Transverse colon (tissue), 4 donors: ENCODE measurements at regions of chr7 and their contacts with region 1.

Region 1: DNA sequence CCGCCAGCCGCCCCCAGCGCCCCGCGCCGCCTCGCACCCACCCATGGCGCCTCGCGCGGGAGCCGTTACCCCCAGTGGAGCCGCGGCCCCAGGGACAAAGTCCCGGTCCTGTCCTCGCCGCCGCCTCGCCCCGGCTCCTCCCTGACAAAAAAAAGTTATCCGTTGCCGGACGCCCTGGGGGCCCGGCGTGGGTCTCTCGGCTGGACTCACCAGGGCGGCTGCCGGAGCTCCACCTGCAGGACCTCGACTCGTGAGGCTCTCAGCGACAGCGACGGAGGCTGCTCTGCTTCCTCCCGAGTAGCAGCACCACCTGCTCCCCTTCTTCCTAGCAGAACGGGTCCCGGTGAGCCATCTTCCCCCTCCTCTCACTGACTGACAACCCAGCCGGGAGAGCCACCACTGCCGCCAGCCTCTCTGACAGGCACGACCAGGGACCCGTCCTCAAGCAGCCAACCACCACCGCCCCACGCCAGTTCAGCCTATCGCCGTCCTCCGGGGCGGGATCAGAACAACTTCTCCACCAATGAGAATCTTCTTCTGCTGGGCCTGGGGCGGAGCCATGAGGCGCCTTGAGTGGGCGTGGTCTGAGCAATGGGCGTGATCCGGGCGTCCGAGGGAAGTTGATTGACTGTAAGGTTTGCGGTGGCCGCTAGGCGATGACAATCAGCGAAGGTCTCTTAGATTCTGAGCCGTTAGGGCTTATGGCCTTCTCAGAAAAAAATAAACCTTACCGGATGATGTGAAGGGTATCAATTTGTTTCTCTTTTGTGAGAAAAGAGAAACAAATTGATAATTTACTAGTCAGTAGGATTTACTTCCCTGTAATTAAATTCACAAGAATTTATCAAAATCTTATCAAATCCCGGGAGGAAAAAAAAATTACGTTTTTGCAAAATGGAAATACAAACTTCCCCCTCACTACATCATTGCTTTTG is at the start of gene HYCC1:
- DNase-seq: peak; percentile 98
- H3K4me3 ChIP-seq: peak within 1 kb of the TSS; percentile 54 to 90 (median 82)
- H3K27ac ChIP-seq: peak within 1 kb of the TSS; percentile 78 to 89 (median 84)
- H3K4me1 ChIP-seq: peaks cover 0 to 19% (median 8%) of the 10 kb centered on the region in 4 donors
- H3K27me3 ChIP-seq: peaks cover 14% of the 10 kb centered on the region
- CTCF ChIP-seq: peak; percentile 56 to 86 (median 63)
- EP300 ChIP-seq: no peak
- POLR2A ChIP-seq: peak; percentile 83
- total RNA-seq, gene HYCC1: 3.7 to 19.8 (median 8.5) TPM

Region 2: DNA sequence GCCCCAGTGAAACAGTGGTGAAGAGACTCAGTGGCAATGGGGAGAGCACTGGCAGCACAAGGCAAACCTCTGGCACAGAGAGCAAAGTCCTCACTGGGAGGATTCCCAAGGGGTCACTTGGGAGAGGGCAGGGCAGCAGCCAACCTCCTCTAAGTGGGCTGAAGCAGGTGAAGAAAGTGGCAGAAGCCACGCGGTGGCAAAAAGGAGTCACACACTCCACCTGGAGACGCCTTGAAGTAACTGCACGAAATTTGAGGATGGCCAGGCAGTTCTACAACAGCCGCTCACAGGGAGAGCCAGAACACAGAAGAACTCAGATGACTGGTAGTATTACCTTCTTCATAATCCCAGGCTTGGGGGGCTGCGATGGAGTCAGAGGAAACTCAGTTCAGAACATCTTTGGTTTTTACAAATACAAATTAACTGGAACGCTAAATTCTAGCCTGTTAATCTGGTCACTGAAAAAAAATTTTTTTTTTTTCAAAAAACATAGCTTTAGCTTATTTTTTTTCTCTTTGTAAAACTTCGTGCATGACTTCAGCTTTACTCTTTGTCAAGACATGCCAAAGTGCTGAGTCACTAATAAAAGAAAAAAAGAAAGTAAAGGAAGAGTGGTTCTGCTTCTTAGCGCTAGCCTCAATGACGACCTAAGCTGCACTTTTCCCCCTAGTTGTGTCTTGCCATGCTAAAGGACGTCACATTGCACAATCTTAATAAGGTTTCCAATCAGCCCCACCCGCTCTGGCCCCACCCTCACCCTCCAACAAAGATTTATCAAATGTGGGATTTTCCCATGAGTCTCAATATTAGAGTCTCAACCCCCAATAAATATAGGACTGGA is 287.4 kb before region 1 on chr7:
- in situ Hi-C with region 1: no loop called
- intact Hi-C with region 1: loop called (anchors 5 kb)
- DNase-seq: peak; percentile 34
- H3K4me3 ChIP-seq: peak overlapping the region; percentile 8 to 42 (median 17)
- H3K27ac ChIP-seq: peak overlapping the region; percentile 59 to 62 (median 61)
- H3K4me1 ChIP-seq: peaks cover 5 to 45% (median 9%) of the 10 kb centered on the region in 4 donors
- H3K27me3 ChIP-seq: no peaks in the 10 kb centered on the region
- CTCF ChIP-seq: peak; percentile 32 to 53 (median 44)
- EP300 ChIP-seq: no peak
- POLR2A ChIP-seq: no peak

Region 3: GRCh38 chr7:22841954-22842353 is 172.0 kb before region 1 on chr7:
- in situ Hi-C with region 1: loop called in 1 of 4 experiments (anchors 25 kb)
- intact Hi-C with region 1: no loop called
- DNase-seq: no peak
- H3K4me3 ChIP-seq: no peak overlapping the region
- H3K27ac ChIP-seq: peak overlapping the region in 3 of 4 donors; percentile 37 to 66 (median 47)
- H3K4me1 ChIP-seq: no peaks in the 10 kb centered on the region
- H3K27me3 ChIP-seq: no peaks in the 10 kb centered on the region
- CTCF ChIP-seq: no peak
- EP300 ChIP-seq: no peak
- POLR2A ChIP-seq: no peak

Region 4: DNA sequence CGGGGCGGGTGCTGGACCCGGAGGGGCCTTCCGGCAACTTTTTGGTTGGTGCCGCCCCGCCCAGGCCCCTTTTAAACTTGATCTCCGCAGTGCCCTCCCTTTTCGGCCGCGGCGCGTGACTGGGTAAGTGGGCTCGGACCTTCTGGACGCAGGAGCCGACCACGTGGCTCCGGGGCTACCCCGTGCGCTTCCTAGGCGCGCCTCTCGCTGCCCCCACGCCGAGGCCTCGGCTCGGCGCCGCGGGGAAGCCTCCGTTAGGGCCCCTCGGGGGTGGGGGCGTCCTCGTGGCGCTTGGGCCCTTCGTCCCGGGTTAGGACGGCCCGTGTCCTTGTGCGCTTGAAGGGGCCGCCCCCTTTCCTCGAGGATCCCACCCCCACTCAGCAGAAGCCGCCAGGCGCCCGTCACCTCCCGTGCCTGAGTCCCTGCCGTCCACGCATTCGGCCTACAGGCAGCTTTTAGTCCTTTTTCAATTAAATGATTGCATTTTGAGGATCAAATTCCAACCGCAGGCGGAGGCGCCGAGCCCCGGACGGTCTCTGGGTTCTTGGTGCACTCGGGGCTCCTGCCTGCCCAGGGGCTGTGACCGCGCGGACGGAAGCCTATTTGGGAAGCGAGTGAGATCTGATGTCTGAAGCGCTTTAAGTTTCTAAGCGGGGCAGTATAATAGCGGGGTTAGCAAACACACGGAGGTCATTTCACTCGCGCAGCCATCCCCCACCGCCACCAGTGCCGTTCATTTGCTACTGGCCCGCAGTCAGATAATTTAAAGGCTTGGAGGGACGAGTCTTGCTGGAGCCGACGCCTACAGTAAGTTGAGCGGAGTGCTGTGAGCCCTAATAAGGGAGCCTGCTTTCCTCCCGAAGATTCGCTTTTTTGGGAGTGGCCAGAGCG is 159.6 kb before region 1 on chr7:
- in situ Hi-C with region 1: loop called in 1 of 4 experiments (anchors 25 kb)
- intact Hi-C with region 1: loop called (anchors 10 kb)
- DNase-seq: peak; percentile 90
- H3K4me3 ChIP-seq: peak overlapping the region; percentile 59 to 90 (median 83)
- H3K27ac ChIP-seq: peak overlapping the region; percentile 92 to 95 (median 94)
- H3K4me1 ChIP-seq: peaks cover 4 to 23% (median 11%) of the 10 kb centered on the region in 4 donors
- H3K27me3 ChIP-seq: no peaks in the 10 kb centered on the region
- CTCF ChIP-seq: peak in 1 of 5 experiments; percentile 36
- EP300 ChIP-seq: no peak
- POLR2A ChIP-seq: peak; percentile 35